PC-9 (cell line): ENCODE measurements at regions of chr15 and their contacts with region 1.

Region 1: DNA sequence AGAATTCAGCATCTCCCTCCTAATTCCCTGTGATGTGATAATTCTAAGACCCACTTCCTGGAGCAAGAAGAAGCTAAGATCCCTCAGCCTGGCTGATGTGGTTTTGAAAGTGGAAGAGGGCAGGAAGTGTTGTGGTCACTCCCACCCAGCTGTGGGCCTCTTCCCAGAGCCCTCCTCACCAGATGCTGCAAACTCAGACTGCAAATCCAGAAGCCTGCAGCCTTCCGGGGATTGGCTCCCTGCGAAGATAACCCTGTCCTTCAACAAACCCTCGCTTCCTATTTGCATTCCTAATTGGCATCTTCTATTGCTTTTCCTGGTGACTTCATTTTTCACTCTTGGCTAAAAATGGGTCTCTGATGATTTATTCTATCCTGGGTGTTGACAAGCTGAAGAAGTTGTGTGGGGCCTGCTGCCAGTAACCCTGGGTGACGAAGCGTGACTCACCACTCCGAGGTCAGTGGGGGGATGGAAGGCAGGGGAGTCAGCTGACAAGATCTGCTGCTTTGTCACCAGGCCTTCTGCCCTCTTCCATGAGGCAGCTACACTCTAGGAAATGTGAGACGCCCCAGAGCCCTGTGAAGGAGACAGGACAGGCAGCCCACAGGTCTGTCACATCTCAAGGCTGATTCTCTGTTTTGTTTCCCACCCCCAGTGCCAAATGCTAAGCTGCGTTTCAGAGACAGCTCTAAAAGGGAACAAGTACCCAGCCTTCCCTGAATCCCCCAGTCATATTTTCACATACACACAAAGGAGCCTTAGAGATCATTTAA is 99.7 kb upstream of the LIPC start:
- DNase-seq: peak; percentile 96
- H3K4me3 ChIP-seq: peak overlapping the region; percentile 52; the same call in 1 of the 2 replicates
- H3K27ac ChIP-seq: peak overlapping the region; percentile 98
- H3K4me1 ChIP-seq: peaks cover 55% of the 10 kb centered on the region
- H3K27me3 ChIP-seq: no peaks in the 10 kb centered on the region
- CTCF ChIP-seq: no peak

Region 2: GRCh38 chr15:58269455-58270414 is 62.4 kb before region 1 on chr15:
- CTCF ChIA-PET with region 1: no interaction called
- POLR2A ChIA-PET with region 1: interaction called, 10 read pairs
- intact Hi-C with region 1: loop called (anchors 1 kb)
- DNase-seq: peak; percentile 44 to 62
- H3K4me3 ChIP-seq: no peak overlapping the region
- H3K27ac ChIP-seq: peak overlapping the region; percentile 39
- H3K4me1 ChIP-seq: peaks cover 34% of the 10 kb centered on the region
- H3K27me3 ChIP-seq: no peaks in the 10 kb centered on the region
- CTCF ChIP-seq: peak; percentile 74

Region 3: GRCh38 chr15:58396181-58396580 is 64.1 kb after region 1 on chr15:
- CTCF ChIA-PET with region 1: no interaction called
- POLR2A ChIA-PET with region 1: interaction called, 10 read pairs
- intact Hi-C with region 1: loop called (anchors 1 kb)
- DNase-seq: peak; percentile 35 to 90
- H3K4me3 ChIP-seq: no peak overlapping the region
- H3K27ac ChIP-seq: peak overlapping the region; percentile 79
- H3K4me1 ChIP-seq: peaks cover 65% of the 10 kb centered on the region
- H3K27me3 ChIP-seq: no peaks in the 10 kb centered on the region
- CTCF ChIP-seq: no peak

Region 4: DNA sequence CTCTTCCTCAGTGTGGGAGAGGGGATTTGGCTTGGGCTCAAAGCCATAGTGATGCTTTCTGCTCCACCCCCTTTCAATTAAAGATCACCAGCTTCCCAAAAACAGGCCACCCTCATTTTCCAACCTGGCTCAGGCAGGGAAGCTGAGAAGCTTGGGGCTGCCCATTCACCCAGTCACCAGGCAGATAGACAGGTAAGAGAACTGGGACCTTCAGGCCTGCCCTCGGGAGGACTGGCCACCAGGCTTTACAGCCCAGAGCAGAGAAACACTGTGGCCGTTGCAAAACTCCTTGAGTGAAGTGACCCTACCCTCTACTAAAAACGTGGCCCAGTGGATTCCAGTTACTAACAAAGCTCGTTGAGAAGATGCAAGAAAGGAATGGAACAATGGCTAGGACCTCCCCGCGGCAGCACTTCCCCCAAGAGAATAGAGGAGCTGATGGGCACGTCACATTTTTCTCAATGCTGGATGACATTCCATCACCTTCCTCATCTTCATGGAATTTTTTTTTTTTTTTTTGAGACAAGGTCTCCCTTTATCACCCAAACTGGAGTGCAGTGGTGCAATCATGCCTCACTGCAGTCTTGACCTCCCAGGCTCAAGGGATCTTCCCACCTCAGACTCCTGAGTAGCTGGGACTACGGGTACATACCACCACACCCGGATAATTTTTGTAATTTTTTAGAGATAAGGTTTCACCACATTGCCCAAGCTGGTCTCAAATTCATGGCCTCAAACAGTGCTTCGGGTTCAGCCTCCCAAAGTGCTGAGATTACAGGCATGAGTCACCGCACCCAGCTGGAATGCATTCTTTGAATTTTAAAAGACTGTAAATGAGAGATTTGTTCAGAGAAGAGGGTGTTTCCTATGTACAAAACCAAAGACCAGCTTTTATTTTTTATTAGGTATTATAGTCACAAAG is 137.6 kb after region 1 on chr15:
- CTCF ChIA-PET with region 1: no interaction called
- POLR2A ChIA-PET with region 1: interaction called, 13 read pairs
- intact Hi-C with region 1: loop called (anchors 1 kb)
- DNase-seq: peak; percentile 86 to 97
- H3K4me3 ChIP-seq: peak overlapping the region; percentile 35; the same call in 1 of the 2 replicates
- H3K27ac ChIP-seq: peak overlapping the region; percentile 100
- H3K4me1 ChIP-seq: peaks cover 66% of the 10 kb centered on the region
- H3K27me3 ChIP-seq: no peaks in the 10 kb centered on the region
- CTCF ChIP-seq: no peak

Region 5: DNA sequence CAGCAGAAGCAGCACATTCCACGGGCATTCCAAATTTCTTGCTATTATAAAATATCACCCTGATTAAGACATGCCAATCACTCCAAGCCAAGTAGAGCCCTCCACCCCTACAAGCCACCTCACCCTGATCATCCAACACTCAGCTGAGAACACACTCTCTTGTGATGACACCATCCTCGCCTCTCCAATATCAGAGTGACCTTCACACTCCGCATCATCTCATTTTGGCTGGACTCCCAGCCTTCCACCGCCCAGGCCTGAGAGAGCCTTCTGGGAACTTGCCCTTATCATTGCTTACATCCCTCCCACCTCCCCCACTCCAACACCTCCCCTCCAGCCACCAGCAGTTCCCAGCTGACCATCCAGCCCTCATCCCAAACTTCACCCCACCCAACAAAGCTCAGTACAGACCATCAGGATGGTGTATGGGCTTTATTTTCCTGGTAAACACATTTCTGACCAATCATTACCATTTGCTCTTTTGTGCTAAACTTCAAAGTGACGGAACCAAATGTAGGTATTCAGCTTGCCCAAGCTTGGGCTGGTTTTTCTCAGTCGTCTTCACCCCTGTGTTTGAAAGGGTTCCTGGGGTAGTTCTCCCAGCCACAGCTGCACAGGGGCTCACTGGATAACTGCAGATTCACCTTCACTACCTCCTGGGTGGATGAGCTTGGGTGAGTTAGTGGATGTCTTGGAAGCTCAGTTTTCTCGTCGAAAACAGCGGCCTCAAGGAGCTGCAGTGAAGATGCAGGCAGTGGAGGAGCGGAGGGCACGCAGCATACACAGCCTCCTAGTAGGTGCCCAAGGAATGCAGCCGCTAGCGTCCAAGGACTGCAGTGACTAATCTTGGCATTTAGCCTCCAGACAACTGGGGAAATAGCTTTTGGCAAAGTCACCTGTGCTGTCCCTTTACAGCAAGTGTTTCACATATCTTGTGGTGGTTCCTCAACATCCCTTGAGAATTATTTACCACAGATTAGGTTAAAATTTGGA is 214.8 kb after region 1 on chr15:
- CTCF ChIA-PET with region 1: no interaction called
- POLR2A ChIA-PET with region 1: no interaction called
- intact Hi-C with region 1: loop called (anchors 1 kb)
- DNase-seq: peak; percentile 88 to 97
- H3K4me3 ChIP-seq: peak overlapping the region; percentile 43; the same call in 1 of the 2 replicates
- H3K27ac ChIP-seq: peak overlapping the region; percentile 97
- H3K4me1 ChIP-seq: peaks cover 50% of the 10 kb centered on the region
- H3K27me3 ChIP-seq: no peaks in the 10 kb centered on the region
- CTCF ChIP-seq: no peak

Region 6: GRCh38 chr15:58770857-58771620 is 438.9 kb after region 1 on chr15 and contains the start of gene MINDY2:
- CTCF ChIA-PET with region 1: no interaction called
- POLR2A ChIA-PET with region 1: interaction called, 13 read pairs
- intact Hi-C with region 1: loop called (anchors 1 kb)
- DNase-seq: peak; percentile 92 to 97
- H3K4me3 ChIP-seq: peak within 1 kb of the TSS; percentile 80
- H3K27ac ChIP-seq: peak within 1 kb of the TSS; percentile 87
- H3K4me1 ChIP-seq: peaks cover 37% of the 10 kb centered on the region
- H3K27me3 ChIP-seq: no peaks in the 10 kb centered on the region
- CTCF ChIP-seq: no peak; the same call in 1 of the 2 replicates
- total RNA-seq, gene MINDY2: 18.4 and 22.8 TPM in 2 replicates

Region 7: GRCh38 chr15:58830556-58830955 is 498.5 kb after region 1 on chr15:
- CTCF ChIA-PET with region 1: no interaction called
- POLR2A ChIA-PET with region 1: no interaction called
- intact Hi-C with region 1: no loop called
- DNase-seq: no peak
- H3K4me3 ChIP-seq: no peak overlapping the region
- H3K27ac ChIP-seq: no peak overlapping the region
- H3K4me1 ChIP-seq: no peaks in the 10 kb centered on the region
- H3K27me3 ChIP-seq: no peaks in the 10 kb centered on the region
- CTCF ChIP-seq: no peak

Region 8: DNA sequence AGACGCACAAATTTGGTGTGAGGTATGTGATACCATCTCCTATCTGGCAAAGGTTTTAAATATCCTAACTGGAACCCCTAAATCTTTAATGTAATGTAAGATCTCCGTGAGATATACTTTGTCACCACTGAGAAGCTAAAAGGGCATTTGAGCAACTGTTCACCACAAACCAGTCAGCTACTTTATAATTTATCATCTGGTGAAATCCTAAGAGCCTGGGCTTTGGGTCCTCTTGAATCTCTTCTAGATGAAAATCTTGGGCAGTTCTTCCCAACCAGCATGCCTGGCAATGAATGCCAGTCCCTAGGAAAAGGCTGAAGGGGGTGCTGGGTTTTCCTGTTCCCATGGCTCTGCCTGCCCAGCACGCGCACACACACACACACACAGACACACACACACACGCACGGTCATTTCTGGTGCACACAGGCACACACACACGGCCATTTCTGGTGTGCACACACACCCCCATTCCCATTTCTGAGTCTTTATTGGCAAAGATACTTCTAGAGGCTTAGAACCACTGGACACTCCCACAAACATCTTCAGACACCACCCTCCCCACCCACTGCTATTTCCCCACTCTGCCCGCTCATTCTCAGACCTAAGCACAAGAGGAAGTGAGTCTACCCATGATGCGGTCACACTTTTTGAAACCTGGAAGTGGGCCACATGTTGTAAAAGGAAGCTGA is 968.0 kb after region 1 on chr15:
- CTCF ChIA-PET with region 1: no interaction called
- POLR2A ChIA-PET with region 1: interaction called, 25 read pairs
- intact Hi-C with region 1: no loop called
- DNase-seq: peak; percentile 75 to 93
- H3K4me3 ChIP-seq: no peak overlapping the region
- H3K27ac ChIP-seq: peak overlapping the region; percentile 97
- H3K4me1 ChIP-seq: peaks cover 99% of the 10 kb centered on the region
- H3K27me3 ChIP-seq: no peaks in the 10 kb centered on the region
- CTCF ChIP-seq: no peak